Transverse colon (tissue), 4 donors: ENCODE measurements at regions of chr9 and their contacts with region 1.

Region 1: GRCh38 chr9:130672466-130672865 is 8.1 kb downstream of the PRDM12 start:
- DNase-seq: no peak
- H3K4me3 ChIP-seq: no peak overlapping the region
- H3K27ac ChIP-seq: no peak overlapping the region
- H3K4me1 ChIP-seq: no peaks in the 10 kb centered on the region
- H3K27me3 ChIP-seq: peaks cover 14% of the 10 kb centered on the region
- CTCF ChIP-seq: no peak
- EP300 ChIP-seq: no peak
- POLR2A ChIP-seq: no peak

Region 2: DNA sequence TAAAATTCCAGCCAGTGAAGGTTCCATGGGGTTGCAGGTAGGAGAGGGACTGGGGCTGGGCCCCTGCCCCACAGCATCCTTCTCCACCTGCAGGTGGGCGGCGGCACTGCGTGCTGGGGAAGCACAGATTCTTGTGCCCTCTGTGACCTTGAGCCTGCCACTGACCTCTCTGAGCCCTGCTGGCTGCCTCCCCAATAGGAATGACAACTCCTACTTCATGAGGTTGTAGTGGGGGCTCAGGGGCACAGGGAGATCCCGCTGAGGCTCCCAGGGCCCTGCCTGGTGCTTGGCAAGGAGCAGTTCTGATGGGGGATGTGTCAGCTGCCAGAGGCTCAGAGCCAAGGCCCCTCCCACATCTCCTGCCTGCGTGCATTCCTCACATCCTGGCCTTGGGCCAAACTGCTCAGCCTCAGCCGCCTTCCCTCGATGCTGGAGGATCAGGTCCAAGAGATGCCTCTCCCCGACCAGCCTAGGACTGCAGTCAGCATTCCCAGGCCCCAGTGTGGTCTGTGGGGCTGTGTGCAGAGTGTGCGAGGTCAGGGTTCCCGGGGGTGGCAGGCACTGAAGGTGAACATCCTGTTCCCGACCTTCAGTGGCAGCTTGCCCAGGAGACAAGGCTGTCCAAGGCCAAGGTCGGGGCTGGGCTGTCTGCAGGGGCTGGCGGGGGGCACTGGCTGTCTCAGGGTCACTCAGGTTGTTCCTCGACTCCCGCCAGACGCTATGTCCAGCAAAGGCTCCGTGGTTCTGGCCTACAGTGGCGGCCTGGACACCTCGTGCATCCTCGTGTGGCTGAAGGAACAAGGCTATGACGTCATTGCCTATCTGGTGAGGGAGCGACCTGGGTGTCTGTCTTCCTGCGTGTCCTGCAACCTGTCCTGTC is 220.7 kb before region 1 on chr9:
- in situ Hi-C with region 1: loop called in 1 of 4 experiments (anchors 10 kb)
- intact Hi-C with region 1: no loop called
- DNase-seq: peak; percentile 87
- H3K4me3 ChIP-seq: no peak overlapping the region
- H3K27ac ChIP-seq: peak overlapping the region; percentile 56 to 79 (median 74)
- H3K4me1 ChIP-seq: peaks cover 27 to 43% (median 38%) of the 10 kb centered on the region in 4 donors
- H3K27me3 ChIP-seq: no peaks in the 10 kb centered on the region
- CTCF ChIP-seq: peak; percentile 40 to 66 (median 44)
- EP300 ChIP-seq: no peak
- POLR2A ChIP-seq: peak; percentile 20

Region 3: DNA sequence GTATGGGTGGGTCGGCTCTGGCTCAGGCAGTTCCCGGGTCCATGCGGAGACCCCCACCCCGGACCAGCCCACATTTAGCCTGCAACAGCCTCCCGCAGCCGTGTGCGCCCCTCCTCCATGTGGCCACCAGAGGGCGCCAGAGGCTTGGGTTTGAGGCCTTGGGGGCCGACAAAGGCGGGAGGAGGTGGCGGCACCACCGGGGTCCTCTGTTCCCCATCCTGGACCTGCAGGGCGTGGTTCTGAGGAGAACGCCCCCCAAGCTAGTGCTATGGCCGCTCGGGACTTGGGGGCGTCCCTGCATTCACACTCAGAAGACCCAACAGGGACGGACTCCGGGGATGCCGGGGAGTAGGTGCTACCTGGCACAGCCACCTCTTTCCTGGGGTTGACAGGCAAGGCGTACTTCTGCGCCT is 211.2 kb before region 1 on chr9:
- in situ Hi-C with region 1: loop called in 2 of 4 experiments (anchors 10 kb)
- intact Hi-C with region 1: no loop called
- DNase-seq: peak; percentile 63
- H3K4me3 ChIP-seq: no peak overlapping the region
- H3K27ac ChIP-seq: no peak overlapping the region
- H3K4me1 ChIP-seq: no peaks in the 10 kb centered on the region
- H3K27me3 ChIP-seq: no peaks in the 10 kb centered on the region
- CTCF ChIP-seq: peak; percentile 79 to 95 (median 92)
- EP300 ChIP-seq: no peak
- POLR2A ChIP-seq: no peak

Region 4: GRCh38 chr9:130478736-130479575 is 193.5 kb before region 1 on chr9:
- in situ Hi-C with region 1: loop called in 1 of 4 experiments (anchors 10 kb)
- intact Hi-C with region 1: no loop called
- DNase-seq: no peak
- H3K4me3 ChIP-seq: no peak overlapping the region
- H3K27ac ChIP-seq: no peak overlapping the region
- H3K4me1 ChIP-seq: no peaks in the 10 kb centered on the region
- H3K27me3 ChIP-seq: no peaks in the 10 kb centered on the region
- CTCF ChIP-seq: no peak
- EP300 ChIP-seq: no peak
- POLR2A ChIP-seq: no peak

Region 5: DNA sequence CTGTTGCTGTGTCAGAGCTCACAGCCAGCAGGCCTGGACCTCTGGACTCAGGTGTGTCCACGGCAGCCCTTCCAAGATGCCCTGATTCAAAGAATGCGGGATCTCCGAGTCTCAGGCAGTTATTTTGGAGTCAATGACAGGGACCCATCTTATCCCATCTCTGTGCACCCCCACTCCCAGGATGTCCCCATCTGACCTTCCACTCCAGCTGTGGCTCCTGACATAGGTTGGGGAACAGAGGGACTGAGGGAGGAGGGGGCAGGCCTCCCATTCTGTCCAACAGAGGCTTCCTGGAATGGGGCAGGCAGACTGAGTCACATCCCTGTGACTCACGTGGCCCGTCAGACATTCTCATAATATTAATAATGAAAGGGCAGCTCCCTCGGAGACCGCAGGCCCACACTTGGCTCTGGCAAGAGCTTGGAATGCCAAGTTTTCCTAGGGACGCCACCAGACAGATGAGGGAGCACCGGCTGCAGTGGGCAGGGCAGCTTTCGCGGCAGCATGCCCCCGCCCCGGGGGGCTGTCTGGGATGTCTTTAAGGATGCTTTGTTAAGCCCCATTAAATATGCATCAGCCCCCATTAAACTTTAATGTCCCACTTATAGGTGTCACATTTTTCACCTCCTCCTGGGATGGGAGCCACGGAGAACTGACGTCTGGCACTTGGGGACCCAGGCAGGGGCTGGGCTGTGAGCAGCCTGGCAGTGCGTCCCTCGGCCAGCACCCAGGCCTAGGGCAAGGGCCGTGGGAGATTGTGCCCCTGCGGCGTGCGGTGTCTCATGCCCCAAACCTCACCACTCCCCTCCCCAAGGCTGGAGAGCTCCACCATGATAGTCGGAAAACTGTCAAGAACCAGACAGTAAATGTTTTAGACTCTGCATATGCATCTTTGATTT is 290.2 kb after region 1 on chr9:
- in situ Hi-C with region 1: no loop called
- intact Hi-C with region 1: no loop called
- DNase-seq: no peak
- H3K4me3 ChIP-seq: no peak overlapping the region
- H3K27ac ChIP-seq: no peak overlapping the region
- H3K4me1 ChIP-seq: peaks cover 0 to 7% (median 2%) of the 10 kb centered on the region in 4 donors
- H3K27me3 ChIP-seq: no peaks in the 10 kb centered on the region
- CTCF ChIP-seq: no peak
- EP300 ChIP-seq: no peak
- POLR2A ChIP-seq: no peak